CD8-positive, alpha-beta memory T cell (primary cell): ENCODE measurements at regions of chr6 and their contacts with region 1.

Region 1: DNA sequence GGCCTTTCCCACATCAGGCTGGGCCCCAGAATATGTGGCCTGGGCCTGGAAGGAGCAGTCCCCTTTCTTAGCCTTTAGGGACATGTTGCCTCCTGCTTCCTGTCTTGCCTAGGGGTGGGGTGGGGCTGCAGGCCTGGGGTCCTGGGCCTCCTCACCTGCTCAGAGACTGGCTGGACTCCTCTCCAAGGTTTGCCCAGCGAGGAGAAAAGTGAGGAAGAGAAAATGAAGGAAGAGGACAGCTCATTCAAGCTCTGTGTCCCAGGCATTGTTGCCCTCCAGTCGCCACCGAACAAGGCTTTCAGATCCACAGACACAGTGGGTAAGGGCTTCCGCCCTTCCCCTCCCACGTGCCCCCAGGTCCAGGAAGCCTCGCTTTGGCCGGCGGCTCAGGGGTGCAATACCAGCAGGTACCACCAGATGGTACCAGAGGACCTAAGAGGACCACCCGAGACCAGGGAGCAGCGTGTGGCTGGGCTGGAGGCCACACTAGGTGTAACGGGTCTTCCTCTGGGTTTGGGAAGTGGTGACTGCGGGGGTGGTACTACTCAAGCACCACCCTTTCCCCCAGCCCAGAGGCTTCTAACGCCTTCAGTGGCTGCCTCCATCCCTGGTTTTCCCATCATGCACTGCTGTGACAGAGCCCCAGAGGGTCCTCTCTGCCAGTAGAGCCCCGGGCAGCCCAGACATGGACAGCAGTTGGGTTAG is 5.5 kb upstream of the BAK1 start:
- DNase-seq: peak; percentile 79 to 92 (median 83)
- H3K4me3 ChIP-seq: peak overlapping the region; percentile 26
- H3K4me3 Mint-ChIP-seq: peak overlapping the region in 5 of 7 donors; percentile 24 to 70 (median 50)
- H3K27ac ChIP-seq: no peak overlapping the region
- H3K27ac Mint-ChIP-seq: peak overlapping the region; percentile 80 to 96 (median 90)
- H3K4me1 ChIP-seq: peaks cover 13% of the 10 kb centered on the region
- H3K4me1 Mint-ChIP-seq: peaks cover 14 to 19% (median 16%) of the 10 kb centered on the region in 3 donors
- H3K27me3 ChIP-seq: no peaks in the 10 kb centered on the region
- H3K27me3 Mint-ChIP-seq: no peaks in the 10 kb centered on the region

Region 2: GRCh38 chr6:33620856-33621710 is 35.5 kb after region 1 on chr6 and contains the start of gene ITPR3:
- CTCF ChIA-PET with region 1: interaction called, 10 read pairs
- POLR2A ChIA-PET with region 1: interaction called, 9 read pairs
- DNase-seq: peak; percentile 69 to 87 (median 81)
- H3K4me3 ChIP-seq: peak within 1 kb of the TSS; percentile 90
- H3K4me3 Mint-ChIP-seq: peak within 1 kb of the TSS; percentile 95 to 98 (median 97)
- H3K27ac ChIP-seq: peak within 1 kb of the TSS; percentile 89
- H3K27ac Mint-ChIP-seq: peak within 1 kb of the TSS; percentile 95 to 100 (median 98)
- H3K4me1 ChIP-seq: peaks cover 41% of the 10 kb centered on the region
- H3K4me1 Mint-ChIP-seq: peaks cover 63 to 69% (median 69%) of the 10 kb centered on the region in 3 donors
- H3K27me3 ChIP-seq: no peaks in the 10 kb centered on the region
- H3K27me3 Mint-ChIP-seq: no peaks in the 10 kb centered on the region
- total RNA-seq, gene ITPR3: 42.0 to 43.3 TPM

Region 3: GRCh38 chr6:33683051-33683571 is 97.6 kb after region 1 on chr6:
- CTCF ChIA-PET with region 1: no interaction called
- POLR2A ChIA-PET with region 1: no interaction called
- DNase-seq: peak in 3 of 5 donors; percentile 17 to 25 (median 20)
- H3K4me3 ChIP-seq: no peak overlapping the region
- H3K4me3 Mint-ChIP-seq: peak overlapping the region in 1 of 7 donors; percentile 45
- H3K27ac ChIP-seq: peak overlapping the region; percentile 31
- H3K27ac Mint-ChIP-seq: peak overlapping the region in 7 of 8 donors; percentile 66 to 90 (median 83)
- H3K4me1 ChIP-seq: peaks cover 12% of the 10 kb centered on the region
- H3K4me1 Mint-ChIP-seq: peaks cover 0 to 13% (median 11%) of the 10 kb centered on the region in 3 donors
- H3K27me3 ChIP-seq: no peaks in the 10 kb centered on the region
- H3K27me3 Mint-ChIP-seq: no peaks in the 10 kb centered on the region

Region 4: DNA sequence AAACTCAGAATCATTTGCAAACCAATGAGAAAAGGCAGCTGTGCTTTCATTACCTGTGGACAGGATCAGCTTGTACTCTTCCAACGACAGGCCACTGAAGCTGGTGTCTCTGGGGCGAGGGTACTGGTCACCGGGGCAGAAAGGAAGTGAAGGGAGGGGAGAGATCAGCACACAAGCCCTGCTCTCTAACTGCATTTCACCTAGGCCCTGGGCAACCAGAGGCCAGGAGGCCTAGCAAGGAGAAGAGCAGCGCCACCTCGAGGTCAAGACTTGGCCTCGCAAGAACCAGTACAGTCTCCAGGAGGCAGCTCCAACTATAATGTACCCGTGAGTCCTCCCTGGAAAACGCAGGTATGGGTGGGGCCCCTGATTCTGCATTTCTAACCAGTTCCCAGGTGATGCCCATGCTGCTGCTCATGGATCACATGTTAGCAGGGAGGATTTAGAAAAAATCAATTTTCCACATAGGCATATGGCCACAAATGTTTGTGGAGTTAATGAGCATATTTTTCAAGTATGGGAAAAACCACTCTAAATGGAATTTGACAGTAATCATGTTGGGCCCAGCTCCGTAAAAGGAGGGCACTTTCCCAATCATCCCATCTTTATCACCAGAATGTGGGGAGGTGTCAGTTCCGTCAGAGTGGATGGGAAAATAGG is 115.0 kb after region 1 on chr6:
- CTCF ChIA-PET with region 1: interaction called, 29 read pairs
- POLR2A ChIA-PET with region 1: interaction called, 11 read pairs
- DNase-seq: peak; percentile 60 to 77 (median 61)
- H3K4me3 ChIP-seq: no peak overlapping the region
- H3K4me3 Mint-ChIP-seq: no peak overlapping the region
- H3K27ac ChIP-seq: no peak overlapping the region
- H3K27ac Mint-ChIP-seq: peak overlapping the region; percentile 8 to 94 (median 74)
- H3K4me1 ChIP-seq: peaks cover 33% of the 10 kb centered on the region
- H3K4me1 Mint-ChIP-seq: peaks cover 25 to 30% (median 29%) of the 10 kb centered on the region in 3 donors
- H3K27me3 ChIP-seq: no peaks in the 10 kb centered on the region
- H3K27me3 Mint-ChIP-seq: no peaks in the 10 kb centered on the region

Region 5: DNA sequence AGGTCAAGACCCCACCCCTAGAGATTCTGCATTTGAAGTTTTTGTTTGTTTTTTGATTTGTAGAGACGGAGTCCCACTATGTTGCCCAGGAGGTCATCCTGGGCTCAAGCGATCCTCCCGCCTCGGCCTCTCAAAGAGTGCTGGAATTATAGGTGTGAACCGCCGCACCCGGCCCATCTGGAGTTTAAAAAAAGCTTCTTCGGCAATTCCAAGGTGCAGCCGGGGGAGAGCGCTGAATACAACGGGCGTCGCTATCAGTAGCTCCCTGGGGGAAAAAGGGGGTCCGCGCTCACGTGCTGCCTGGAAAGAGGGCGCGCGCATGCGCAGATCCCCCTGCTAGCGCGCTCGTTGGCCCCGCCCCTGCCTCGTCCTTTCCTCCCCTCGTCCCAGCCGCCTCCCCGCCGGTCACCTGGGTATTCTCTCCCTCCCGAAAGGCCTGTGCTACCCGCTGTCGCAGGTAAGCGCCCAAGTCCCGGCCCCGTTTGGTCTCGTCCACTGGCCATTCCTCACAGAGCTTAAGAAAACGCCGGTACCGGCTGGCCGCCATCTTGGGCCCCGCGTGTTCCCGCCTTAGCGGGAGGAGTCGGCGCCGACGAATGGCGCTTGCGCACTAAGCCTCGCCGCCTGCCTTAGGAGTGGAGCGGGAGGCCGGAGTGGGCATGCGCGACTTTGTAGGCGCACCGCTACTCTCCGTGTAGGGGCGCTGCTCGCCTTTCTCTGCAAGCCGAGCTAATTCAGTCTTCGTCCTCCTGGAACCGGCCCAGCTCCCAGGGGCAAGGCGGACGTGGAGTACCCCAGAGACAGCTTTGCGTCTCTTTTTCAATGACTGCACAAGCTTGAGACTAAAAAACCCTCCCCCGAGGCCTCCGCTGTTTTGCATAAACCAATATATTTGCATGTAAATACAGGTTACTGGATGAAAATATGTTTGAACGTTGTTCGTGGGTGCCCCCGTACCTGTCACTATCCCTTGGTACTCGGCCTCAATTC is 125.9 kb after region 1 on chr6 and contains the start of gene UQCC2:
- CTCF ChIA-PET with region 1: interaction called, 13 read pairs
- POLR2A ChIA-PET with region 1: interaction called, 8 read pairs
- DNase-seq: peak; percentile 96 to 99 (median 98)
- H3K4me3 ChIP-seq: peak within 1 kb of the TSS; percentile 98
- H3K4me3 Mint-ChIP-seq: peak within 1 kb of the TSS; percentile 98 to 100 (median 99)
- H3K27ac ChIP-seq: peak within 1 kb of the TSS; percentile 91
- H3K27ac Mint-ChIP-seq: peak within 1 kb of the TSS; percentile 96 to 99 (median 98)
- H3K4me1 ChIP-seq: peaks cover 18% of the 10 kb centered on the region
- H3K4me1 Mint-ChIP-seq: peaks cover 26 to 39% (median 39%) of the 10 kb centered on the region in 3 donors
- H3K27me3 ChIP-seq: no peaks in the 10 kb centered on the region
- H3K27me3 Mint-ChIP-seq: peaks cover 0 to 2% of the 10 kb centered on the region in 2 donors
- total RNA-seq, gene UQCC2: 150 to 157 TPM